ENCODE measurements at regions of chr6 and their contacts with region 1.

Region 1: DNA sequence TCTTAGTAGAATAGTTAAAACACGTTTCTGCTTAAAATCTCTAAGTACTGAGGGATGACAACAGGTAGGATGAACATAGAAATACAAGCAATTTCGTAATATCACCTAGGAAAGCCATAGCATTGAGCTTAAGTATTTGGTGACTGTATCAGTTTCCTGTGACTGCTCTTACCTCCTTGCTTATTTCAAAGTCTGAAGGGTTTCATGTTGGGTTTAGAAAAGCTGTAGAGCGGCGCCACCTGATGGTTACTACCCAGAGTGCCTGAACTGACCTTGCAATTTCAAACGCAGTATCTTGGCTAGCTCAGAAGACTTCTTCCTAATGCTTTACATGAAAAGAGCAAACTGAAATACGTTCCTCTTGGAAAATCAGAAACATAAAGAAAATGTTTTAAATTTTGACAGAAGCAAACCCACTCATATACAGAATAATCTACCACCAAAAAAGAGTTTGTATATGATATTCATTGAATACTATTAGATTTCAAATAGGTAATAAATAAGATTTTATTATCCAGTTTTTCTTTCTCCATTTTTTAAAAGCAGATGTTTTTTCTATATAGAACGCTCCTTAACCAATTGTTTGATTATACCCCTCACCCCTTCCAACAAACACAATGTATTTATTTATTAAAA is 82.3 kb upstream of the RIPOR2 start:
- DNase-seq: peak; percentile 80
- ATAC-seq: peak; percentile 87
- H3K4me3 Mint-ChIP-seq: no peak overlapping the region
- H3K27ac Mint-ChIP-seq: peak overlapping the region; percentile 34; the same call in 1 of the 2 replicates
- H3K4me1 Mint-ChIP-seq: peaks cover 24% of the 10 kb centered on the region
- H3K27me3 Mint-ChIP-seq: no peaks in the 10 kb centered on the region
- CTCF ChIP-seq: peak; percentile 63

Region 2: DNA sequence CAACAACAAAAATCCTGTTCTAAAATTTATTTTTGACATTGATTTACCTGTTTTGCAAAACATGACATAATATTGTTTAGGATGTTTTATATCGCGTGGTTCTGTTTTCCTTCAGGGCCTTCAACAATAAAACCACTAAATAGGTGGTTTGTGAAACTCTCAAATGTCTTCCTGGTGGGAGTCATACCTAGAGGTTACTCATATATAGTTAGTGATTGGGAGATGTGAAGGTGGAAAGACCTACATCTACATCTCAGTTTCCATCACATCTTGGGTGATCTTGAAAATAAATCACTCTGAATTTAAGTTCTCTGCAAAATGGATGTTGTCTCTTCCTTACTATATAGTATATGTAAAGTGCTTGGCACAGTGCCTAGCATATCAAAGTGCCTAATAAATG is 322.0 kb before region 1 on chr6:
- CTCF ChIA-PET with region 1: no interaction called
- POLR2A ChIA-PET with region 1: no interaction called
- DNase-seq: no peak
- ATAC-seq: no peak
- H3K4me3 Mint-ChIP-seq: no peak overlapping the region
- H3K27ac Mint-ChIP-seq: no peak overlapping the region
- H3K4me1 Mint-ChIP-seq: peaks cover 9% of the 10 kb centered on the region
- H3K27me3 Mint-ChIP-seq: no peaks in the 10 kb centered on the region
- CTCF ChIP-seq: no peak

Region 3: DNA sequence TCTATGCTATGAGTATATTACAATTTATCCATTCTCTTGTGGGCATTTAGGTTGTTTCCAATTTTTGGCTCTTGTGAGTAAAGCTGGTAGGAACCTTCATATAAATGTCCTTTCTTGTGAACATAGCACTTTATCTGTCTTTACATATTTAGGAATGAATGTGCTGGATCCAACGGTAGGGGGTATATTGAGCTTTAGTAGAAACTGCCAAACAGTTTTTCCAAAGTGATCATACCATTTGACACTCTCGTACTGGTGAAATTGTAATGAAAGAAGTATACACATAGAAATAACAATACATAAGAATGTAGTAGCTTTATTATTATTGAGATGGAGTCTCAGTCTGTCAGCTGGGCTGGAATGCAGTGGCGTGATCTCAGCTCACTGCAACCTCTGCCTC is 188.4 kb before region 1 on chr6:
- CTCF ChIA-PET with region 1: interaction called, 11 read pairs
- POLR2A ChIA-PET with region 1: no interaction called
- DNase-seq: no peak
- ATAC-seq: no peak
- H3K4me3 Mint-ChIP-seq: no peak overlapping the region
- H3K27ac Mint-ChIP-seq: peak overlapping the region; percentile 39; the same call in 1 of the 2 replicates
- H3K4me1 Mint-ChIP-seq: peaks cover 20% of the 10 kb centered on the region
- H3K27me3 Mint-ChIP-seq: no peaks in the 10 kb centered on the region
- CTCF ChIP-seq: no peak

Region 4: GRCh38 chr6:24888715-24889370 is 129.2 kb before region 1 on chr6:
- CTCF ChIA-PET with region 1: interaction called, 12 read pairs
- POLR2A ChIA-PET with region 1: no interaction called
- DNase-seq: no peak
- ATAC-seq: peak; percentile 68
- H3K4me3 Mint-ChIP-seq: no peak overlapping the region
- H3K27ac Mint-ChIP-seq: no peak overlapping the region
- H3K4me1 Mint-ChIP-seq: peaks cover 26% of the 10 kb centered on the region
- H3K27me3 Mint-ChIP-seq: no peaks in the 10 kb centered on the region
- CTCF ChIP-seq: no peak

Region 5: GRCh38 chr6:24910961-24911712 is 106.9 kb before region 1 on chr6:
- CTCF ChIA-PET with region 1: interaction called, 45 read pairs
- POLR2A ChIA-PET with region 1: no interaction called
- DNase-seq: peak; percentile 69
- ATAC-seq: peak; percentile 50
- H3K4me3 Mint-ChIP-seq: peak overlapping the region; percentile 78
- H3K27ac Mint-ChIP-seq: no peak overlapping the region
- H3K4me1 Mint-ChIP-seq: peaks cover 34% of the 10 kb centered on the region
- H3K27me3 Mint-ChIP-seq: peaks cover 51% of the 10 kb centered on the region
- CTCF ChIP-seq: no peak

Region 6: GRCh38 chr6:24933868-24934401 is 84.1 kb before region 1 on chr6:
- CTCF ChIA-PET with region 1: interaction called, 48 read pairs
- POLR2A ChIA-PET with region 1: no interaction called
- DNase-seq: peak; percentile 61
- ATAC-seq: peak; percentile 81
- H3K4me3 Mint-ChIP-seq: peak overlapping the region; percentile 32
- H3K27ac Mint-ChIP-seq: 0 out of 2 replicates have a peak overlapping the region, but pooled peaks have one; percentile 33
- H3K4me1 Mint-ChIP-seq: peaks cover 66% of the 10 kb centered on the region
- H3K27me3 Mint-ChIP-seq: no peaks in the 10 kb centered on the region
- CTCF ChIP-seq: peak; percentile 79

Region 7: DNA sequence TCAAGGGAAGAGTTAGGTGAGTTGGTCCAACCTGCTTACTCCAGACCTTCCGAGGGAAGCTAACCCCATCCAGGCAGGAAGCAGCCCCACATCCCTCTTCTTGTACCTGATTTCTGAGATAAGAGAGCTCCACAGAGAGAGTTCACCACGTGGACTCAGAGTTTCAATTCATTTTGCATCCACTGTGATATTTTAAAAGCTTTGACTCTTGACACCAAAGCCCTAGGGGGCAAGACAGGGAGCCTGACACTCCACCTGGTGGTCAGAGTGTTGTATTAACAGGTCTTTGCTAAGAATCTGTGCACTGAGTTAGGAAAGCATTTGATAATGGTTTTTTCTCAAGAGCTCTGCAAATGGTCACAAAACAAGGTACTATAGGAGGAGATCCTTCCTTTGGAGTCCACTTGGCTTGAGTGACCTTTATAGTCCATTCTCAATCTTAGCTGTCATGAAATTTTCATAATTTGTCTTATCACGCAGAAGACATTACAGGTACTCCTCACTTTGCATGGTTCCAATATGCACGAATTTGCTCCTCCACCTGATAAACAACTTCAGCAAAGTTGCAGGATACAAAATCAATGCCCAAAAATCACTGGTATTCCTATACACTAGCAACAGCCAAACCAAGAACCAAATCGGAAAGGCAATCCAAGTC is 26.1 kb before region 1 on chr6:
- CTCF ChIA-PET with region 1: interaction called, 29 read pairs
- POLR2A ChIA-PET with region 1: no interaction called
- DNase-seq: peak; percentile 61
- ATAC-seq: peak; percentile 88
- H3K4me3 Mint-ChIP-seq: no peak overlapping the region
- H3K27ac Mint-ChIP-seq: no peak overlapping the region
- H3K4me1 Mint-ChIP-seq: peaks cover 14% of the 10 kb centered on the region
- H3K27me3 Mint-ChIP-seq: peaks cover 2% of the 10 kb centered on the region; the same call in 1 of the 2 replicates
- CTCF ChIP-seq: peak; percentile 83

Region 8: DNA sequence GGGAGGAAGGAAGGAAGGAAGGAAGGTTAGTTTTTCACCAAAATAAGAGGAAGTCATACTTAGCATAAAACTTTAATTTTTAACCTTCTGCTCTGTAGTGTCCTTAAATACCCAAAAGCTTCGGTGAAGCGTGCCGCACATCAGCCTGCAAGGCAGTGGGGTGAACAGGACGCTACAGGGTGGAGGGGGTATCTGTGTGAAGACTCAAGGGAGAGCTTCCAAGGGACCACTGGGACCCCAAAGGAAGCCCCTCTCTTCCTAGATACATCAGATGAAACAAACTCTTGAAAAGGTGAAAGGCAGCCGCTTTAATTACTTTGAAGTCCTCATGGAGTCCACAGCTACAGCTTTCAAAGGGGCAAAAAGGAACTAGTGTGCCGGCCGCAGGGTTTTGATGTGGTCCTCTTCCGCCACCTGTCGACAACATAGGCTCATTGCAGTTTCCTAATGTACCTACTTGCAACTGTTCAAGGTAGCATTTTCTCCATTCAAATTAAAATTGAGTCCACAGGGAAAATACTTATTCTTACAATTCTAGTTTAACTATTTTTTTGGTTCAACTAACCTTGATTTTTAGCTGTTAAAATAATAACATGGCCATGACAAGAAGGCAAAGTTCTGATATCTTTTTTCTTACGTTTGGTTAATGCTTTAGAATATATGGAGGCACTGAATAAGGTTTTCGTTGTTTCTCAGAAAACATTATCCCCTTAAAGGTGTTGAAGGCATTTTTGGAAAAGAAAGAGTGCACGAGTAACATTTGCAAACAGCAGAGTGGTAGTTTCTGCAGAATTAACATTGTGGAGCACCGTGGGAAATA is 52.7 kb after region 1 on chr6:
- CTCF ChIA-PET with region 1: interaction called, 12 read pairs
- POLR2A ChIA-PET with region 1: no interaction called
- DNase-seq: peak; percentile 78
- ATAC-seq: peak; percentile 85
- H3K4me3 Mint-ChIP-seq: peak overlapping the region; percentile 22; the same call in 1 of the 2 replicates
- H3K27ac Mint-ChIP-seq: no peak overlapping the region
- H3K4me1 Mint-ChIP-seq: no peaks in the 10 kb centered on the region
- H3K27me3 Mint-ChIP-seq: no peaks in the 10 kb centered on the region; the same call in 1 of the 2 replicates
- CTCF ChIP-seq: peak; percentile 90